Activated CD4-positive, alpha-beta memory T cell treated with anti-CD3 and anti-CD28 coated beads, Interleukin-2, amount 10 ng/mL, durations not matched to agents 7 days and 5 days (primary cell): ENCODE measurements at regions of chr14 and their contacts with region 1.

Region 1: GRCh38 chr14:103391048-103391447 is 5.8 kb downstream of the MARK3 start:
- DNase-seq: peak; percentile 48
- H3K4me3 Mint-ChIP-seq: no peak overlapping the region
- H3K27ac Mint-ChIP-seq: no peak overlapping the region
- H3K4me1 Mint-ChIP-seq: peaks cover 47% of the 10 kb centered on the region
- H3K27me3 Mint-ChIP-seq: no peaks in the 10 kb centered on the region

Region 2: GRCh38 chr14:103286460-103286859 is 104.6 kb before region 1 on chr14:
- CTCF ChIA-PET with region 1: no interaction called
- POLR2A ChIA-PET with region 1: no interaction called
- DNase-seq: no peak
- H3K4me3 Mint-ChIP-seq: no peak overlapping the region
- H3K27ac Mint-ChIP-seq: no peak overlapping the region
- H3K4me1 Mint-ChIP-seq: no peaks in the 10 kb centered on the region
- H3K27me3 Mint-ChIP-seq: peaks cover 50% of the 10 kb centered on the region

Region 3: GRCh38 chr14:103401223-103402214 is 10.5 kb after region 1 on chr14:
- CTCF ChIA-PET with region 1: interaction called, 29 read pairs
- POLR2A ChIA-PET with region 1: interaction called, 4 read pairs
- DNase-seq: no peak
- H3K4me3 Mint-ChIP-seq: no peak overlapping the region
- H3K27ac Mint-ChIP-seq: peak overlapping the region; percentile 47
- H3K4me1 Mint-ChIP-seq: peaks cover 51% of the 10 kb centered on the region
- H3K27me3 Mint-ChIP-seq: no peaks in the 10 kb centered on the region

Region 4: GRCh38 chr14:103418481-103418818 is 27.4 kb after region 1 on chr14:
- CTCF ChIA-PET with region 1: interaction called, 13 read pairs
- POLR2A ChIA-PET with region 1: no interaction called
- DNase-seq: no peak
- H3K4me3 Mint-ChIP-seq: no peak overlapping the region
- H3K27ac Mint-ChIP-seq: no peak overlapping the region
- H3K4me1 Mint-ChIP-seq: peaks cover 22% of the 10 kb centered on the region
- H3K27me3 Mint-ChIP-seq: no peaks in the 10 kb centered on the region

Region 5: DNA sequence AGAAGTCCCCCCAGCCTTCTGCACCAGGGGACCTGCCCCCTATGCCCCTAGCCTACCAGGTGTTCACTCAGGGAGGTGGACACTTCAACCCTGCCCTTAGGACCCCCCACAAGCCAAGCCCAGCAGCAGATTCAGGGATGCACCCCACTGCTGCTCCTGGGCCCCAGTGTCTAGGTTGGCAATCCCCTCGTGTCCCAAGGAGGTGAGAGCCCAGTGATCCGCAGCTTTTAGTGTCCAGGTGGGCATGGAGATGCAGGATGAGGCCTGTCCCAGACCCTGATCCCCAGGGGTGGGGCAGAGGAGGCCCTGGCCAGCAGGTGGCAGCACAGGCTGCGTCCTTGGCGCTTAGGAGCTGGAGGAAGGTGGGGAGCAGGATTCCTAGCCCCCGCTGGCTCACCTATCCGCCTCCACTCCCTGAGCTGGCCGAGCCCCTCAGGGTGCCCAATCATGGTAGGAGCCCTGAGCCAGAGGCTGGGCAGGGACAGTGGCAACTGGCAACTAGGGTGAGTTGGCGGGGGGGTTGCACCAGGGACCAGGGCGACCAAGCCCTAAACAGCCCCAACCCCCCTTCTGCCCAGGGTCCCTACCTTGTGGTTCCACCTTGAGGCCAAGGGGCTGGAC is 127.5 kb after region 1 on chr14:
- CTCF ChIA-PET with region 1: no interaction called
- POLR2A ChIA-PET with region 1: no interaction called
- DNase-seq: peak; percentile 64
- H3K4me3 Mint-ChIP-seq: no peak overlapping the region
- H3K27ac Mint-ChIP-seq: no peak overlapping the region
- H3K4me1 Mint-ChIP-seq: peaks cover 9% of the 10 kb centered on the region
- H3K27me3 Mint-ChIP-seq: peaks cover 10% of the 10 kb centered on the region